ENCODE measurements at regions of chr2 and their contacts with region 1.

Region 1: DNA sequence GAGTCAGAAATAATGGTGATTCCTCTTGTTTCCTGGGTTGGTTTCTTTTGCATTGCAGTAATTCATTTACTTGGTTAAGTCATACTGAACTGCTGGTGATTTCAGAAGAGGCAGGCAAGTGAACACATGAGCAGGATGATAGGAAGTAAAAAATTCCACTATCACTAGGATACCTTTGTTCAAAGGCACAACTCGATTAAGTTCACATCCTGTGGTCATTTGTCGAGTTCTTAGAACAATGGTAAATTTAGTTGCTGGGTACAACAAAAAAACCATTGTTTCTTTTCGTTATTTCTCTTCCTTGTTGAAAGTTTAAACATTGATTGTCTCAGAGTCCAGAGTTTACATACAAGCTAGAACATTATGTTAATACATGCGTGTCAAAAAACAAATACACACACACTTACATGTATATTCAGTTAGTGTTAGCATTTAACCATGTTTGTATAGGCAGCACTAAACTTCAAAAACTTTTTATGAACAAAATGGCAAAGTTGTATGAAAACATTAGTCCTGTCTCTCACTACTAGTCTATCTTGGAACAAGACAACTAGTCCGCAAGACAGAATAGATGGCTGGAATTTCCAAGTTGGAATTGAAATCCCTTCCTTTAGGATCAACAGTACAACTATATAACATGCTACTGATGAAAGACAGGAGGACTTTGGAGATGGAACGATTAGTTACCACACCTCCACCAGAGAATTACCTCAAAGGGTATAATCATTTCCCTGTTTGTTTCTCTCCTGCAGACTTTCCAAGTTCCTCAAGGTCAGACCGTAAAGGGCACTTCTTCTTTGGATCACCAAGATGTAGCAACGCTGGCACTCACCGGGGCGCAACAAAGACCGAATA is 26.2 kb downstream of the STK39 start:
- DNase-seq: no peak
- H3K4me3 Mint-ChIP-seq: peak overlapping the region; percentile 62
- H3K27ac Mint-ChIP-seq: peak overlapping the region; percentile 88
- H3K4me1 Mint-ChIP-seq: peaks cover 79% of the 10 kb centered on the region
- H3K27me3 Mint-ChIP-seq: no peaks in the 10 kb centered on the region
- CTCF ChIP-seq: no peak

Region 2: DNA sequence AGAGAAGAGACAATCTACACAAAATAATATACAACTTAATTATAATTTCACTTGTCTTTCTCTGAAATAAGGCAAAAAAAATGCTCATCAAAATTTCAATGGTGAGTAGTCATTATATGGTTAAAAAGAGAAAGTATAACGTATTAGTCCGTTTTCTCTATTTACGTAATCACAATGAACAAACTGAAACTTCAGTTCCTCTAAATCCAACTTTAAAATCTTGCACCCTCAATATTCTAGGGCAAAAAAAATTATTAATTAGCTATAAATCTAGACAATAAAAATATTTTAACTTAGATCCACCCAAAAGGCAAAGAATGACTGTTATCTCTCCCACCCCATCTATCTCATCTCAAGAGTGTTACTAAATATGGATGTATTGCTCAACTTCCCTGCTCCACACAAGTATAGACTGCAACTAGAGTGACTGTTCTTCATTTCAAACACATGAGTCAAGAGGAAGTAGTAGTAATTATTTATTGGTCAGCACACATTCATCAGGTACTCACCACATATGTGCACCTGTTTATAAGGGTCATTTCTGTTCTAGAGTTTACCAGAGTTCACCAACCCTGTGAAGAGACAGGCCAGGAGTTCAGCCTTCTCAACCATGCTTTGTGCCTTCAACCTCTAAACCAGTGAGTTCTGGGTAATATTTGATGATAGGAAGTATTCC is 10.2 kb before region 1 on chr2:
- CTCF ChIA-PET with region 1: no interaction called
- intact Hi-C with region 1: loop called (anchors 1 kb)
- DNase-seq: no peak
- H3K4me3 Mint-ChIP-seq: peak overlapping the region; percentile 56
- H3K27ac Mint-ChIP-seq: peak overlapping the region; percentile 98
- H3K4me1 Mint-ChIP-seq: peaks cover 86% of the 10 kb centered on the region
- H3K27me3 Mint-ChIP-seq: no peaks in the 10 kb centered on the region
- CTCF ChIP-seq: no peak

Region 3: DNA sequence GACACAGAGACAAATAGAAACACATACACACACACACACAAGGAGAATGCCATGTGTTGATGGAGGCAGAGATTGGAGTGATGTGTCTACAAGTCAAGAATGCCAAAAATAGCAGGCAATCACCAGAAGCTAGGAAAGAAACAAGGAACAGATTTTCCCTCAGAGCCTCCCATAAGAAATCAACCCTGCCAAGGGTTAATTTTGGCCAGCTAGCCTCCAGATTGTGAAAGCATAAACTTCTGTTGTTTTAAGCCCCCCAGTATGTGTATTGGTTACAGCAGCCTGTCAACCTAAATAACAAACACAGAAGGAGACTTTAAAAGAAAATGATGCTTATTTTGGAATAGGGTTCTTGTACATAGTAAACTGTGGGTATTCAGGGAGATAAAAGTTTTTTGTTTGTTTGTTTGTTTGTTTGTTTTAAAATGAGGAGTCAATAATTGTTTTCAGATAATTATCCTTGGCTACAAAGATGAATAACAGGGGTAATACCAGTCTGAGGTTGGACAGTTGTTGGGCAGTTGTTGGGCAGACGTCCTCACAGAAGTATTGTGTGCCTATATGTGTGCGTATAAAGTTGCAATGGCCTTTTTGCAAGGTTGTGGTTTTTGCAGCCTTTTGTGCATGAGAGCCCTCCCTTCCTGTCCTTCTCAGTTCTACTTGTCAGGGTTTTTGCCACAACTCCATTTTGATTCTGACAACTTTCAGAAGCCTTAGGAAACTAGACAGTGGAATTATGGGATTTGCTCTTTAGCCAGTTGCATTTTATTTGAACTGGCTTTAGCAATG is 32.0 kb after region 1 on chr2:
- CTCF ChIA-PET with region 1: no interaction called
- intact Hi-C with region 1: no loop called
- DNase-seq: no peak
- H3K4me3 Mint-ChIP-seq: no peak overlapping the region
- H3K27ac Mint-ChIP-seq: no peak overlapping the region
- H3K4me1 Mint-ChIP-seq: peaks cover 25% of the 10 kb centered on the region
- H3K27me3 Mint-ChIP-seq: no peaks in the 10 kb centered on the region
- CTCF ChIP-seq: no peak

Measured in Calu3 (cell line).